ENCODE measurements at regions of chr14 and their contacts with region 1.

Region 1: GRCh38 chr14:53953002-53953827 is 3.4 kb downstream of the BMP4 start:
- DNase-seq: peak; percentile 94
- H3K4me3 ChIP-seq: peak overlapping the region; percentile 77 to 99 (median 86)
- H3K27ac ChIP-seq: peak overlapping the region; percentile 73
- H3K4me1 ChIP-seq: peaks cover 35% of the 10 kb centered on the region
- H3K27me3 ChIP-seq: no peaks in the 10 kb centered on the region
- CTCF ChIP-seq: no peak
- POLR2A ChIP-seq: peak; percentile 99

Region 2: GRCh38 chr14:53247596-53248370 is 705.4 kb before region 1 on chr14:
- CTCF ChIA-PET with region 1: no interaction called
- POLR2A ChIA-PET with region 1: no interaction called
- dilution Hi-C with region 1: no loop called
- intact Hi-C with region 1: no loop called
- DNase-seq: no peak
- H3K4me3 ChIP-seq: no peak overlapping the region
- H3K27ac ChIP-seq: no peak overlapping the region
- H3K4me1 ChIP-seq: no peaks in the 10 kb centered on the region
- H3K27me3 ChIP-seq: no peaks in the 10 kb centered on the region
- CTCF ChIP-seq: no peak
- POLR2A ChIP-seq: no peak

Region 3: GRCh38 chr14:53368711-53369191 is 584.5 kb before region 1 on chr14:
- CTCF ChIA-PET with region 1: no interaction called
- POLR2A ChIA-PET with region 1: no interaction called
- dilution Hi-C with region 1: no loop called
- intact Hi-C with region 1: loop called (anchors 5 kb)
- DNase-seq: peak; percentile 77
- H3K4me3 ChIP-seq: no peak overlapping the region
- H3K27ac ChIP-seq: peak overlapping the region; percentile 72
- H3K4me1 ChIP-seq: peaks cover 45% of the 10 kb centered on the region
- H3K27me3 ChIP-seq: no peaks in the 10 kb centered on the region
- CTCF ChIP-seq: no peak
- POLR2A ChIP-seq: no peak

Region 4: DNA sequence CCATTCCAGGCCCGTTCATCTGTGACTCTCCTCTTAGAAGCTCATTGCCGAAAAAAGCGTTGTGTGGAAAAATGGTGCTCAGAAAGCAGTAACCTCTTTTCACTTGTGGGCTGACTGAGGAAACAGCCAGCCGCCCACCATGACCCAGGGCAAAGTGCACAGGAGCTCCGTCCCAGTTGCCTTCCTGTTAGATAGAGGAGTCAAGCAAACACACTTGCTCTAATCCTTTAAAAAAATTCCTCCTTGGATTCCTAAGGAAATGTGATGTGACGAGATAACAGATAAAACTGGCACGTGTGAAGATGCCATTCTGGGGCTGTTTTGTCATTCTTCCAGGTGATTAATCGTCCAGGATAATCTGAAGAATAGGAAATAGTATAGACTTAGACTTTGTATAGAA is 403.3 kb before region 1 on chr14:
- CTCF ChIA-PET with region 1: interaction called, 15 read pairs
- POLR2A ChIA-PET with region 1: interaction called, 12 read pairs
- dilution Hi-C with region 1: no loop called
- intact Hi-C with region 1: no loop called
- DNase-seq: peak; percentile 96
- H3K4me3 ChIP-seq: peak overlapping the region in 1 of 3 experiments; percentile 15
- H3K27ac ChIP-seq: peak overlapping the region; percentile 89
- H3K4me1 ChIP-seq: peaks cover 19% of the 10 kb centered on the region
- H3K27me3 ChIP-seq: no peaks in the 10 kb centered on the region
- CTCF ChIP-seq: no peak
- POLR2A ChIP-seq: peak; percentile 79

Region 5: DNA sequence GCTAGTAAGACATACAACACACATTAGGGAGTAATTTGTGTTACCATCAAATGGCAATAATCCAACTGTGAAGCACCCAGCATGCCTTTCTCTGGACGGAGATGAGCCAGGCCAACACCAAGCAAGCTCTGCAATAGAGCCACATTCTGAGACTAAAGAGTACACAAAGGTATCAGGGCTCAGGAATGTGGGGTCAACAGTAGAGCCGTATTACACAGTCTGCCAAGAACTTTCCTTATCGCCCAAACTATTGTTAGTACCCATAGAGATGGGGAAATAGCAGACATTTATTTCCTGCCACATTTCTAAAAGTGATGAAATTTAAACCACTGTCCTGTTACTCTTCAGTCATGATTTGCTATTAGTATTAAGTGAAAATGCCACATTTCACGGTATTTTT is 110.3 kb before region 1 on chr14:
- CTCF ChIA-PET with region 1: interaction called, 3 read pairs
- POLR2A ChIA-PET with region 1: no interaction called
- dilution Hi-C with region 1: no loop called
- intact Hi-C with region 1: loop called (anchors 1 kb)
- DNase-seq: peak; percentile 75
- H3K4me3 ChIP-seq: no peak overlapping the region
- H3K27ac ChIP-seq: peak overlapping the region; percentile 87
- H3K4me1 ChIP-seq: peaks cover 34% of the 10 kb centered on the region
- H3K27me3 ChIP-seq: no peaks in the 10 kb centered on the region
- CTCF ChIP-seq: no peak
- POLR2A ChIP-seq: peak; percentile 67

Region 6: GRCh38 chr14:53963320-53964227 is 10.4 kb after region 1 on chr14:
- CTCF ChIA-PET with region 1: interaction called, 11 read pairs
- POLR2A ChIA-PET with region 1: interaction called, 4 read pairs
- dilution Hi-C with region 1: no loop called
- intact Hi-C with region 1: no loop called
- DNase-seq: peak; percentile 44
- H3K4me3 ChIP-seq: peak overlapping the region in 2 of 3 experiments; percentile 0 to 35
- H3K27ac ChIP-seq: no peak overlapping the region
- H3K4me1 ChIP-seq: peaks cover 4% of the 10 kb centered on the region
- H3K27me3 ChIP-seq: peaks cover 0 to 3% of the 10 kb centered on the region in 2 experiments
- CTCF ChIP-seq: peak; percentile 44 to 60
- POLR2A ChIP-seq: no peak

Region 7: DNA sequence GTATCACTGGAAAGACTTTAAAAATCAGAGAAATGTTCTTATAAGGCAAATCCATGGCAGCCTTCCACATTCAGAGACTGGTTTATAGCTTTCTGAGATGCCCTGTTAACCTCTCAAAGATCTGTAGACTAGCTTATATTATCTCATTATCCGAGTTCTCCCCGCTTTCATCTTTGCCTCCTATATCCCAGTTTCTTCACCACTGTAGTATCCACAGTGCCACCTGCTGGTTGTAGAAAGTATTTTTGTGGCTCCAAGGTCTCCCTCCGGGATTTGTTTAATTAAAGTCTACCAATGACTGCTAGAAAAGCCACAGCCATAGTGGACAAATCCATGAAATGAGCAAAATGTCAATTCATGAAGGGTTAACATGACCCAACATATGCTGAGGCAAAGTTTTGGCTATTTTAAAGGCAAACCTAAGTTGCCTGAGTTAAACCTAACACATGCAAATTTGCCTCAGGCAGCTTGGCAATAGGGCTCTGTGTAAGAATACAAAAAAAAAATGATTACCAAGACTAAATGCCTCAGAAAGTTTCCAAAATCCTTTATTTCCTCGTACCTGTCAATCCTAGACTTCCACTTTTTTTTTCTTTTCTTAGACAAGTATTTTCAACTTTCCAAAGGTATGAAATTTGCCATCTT is 222.2 kb after region 1 on chr14:
- CTCF ChIA-PET with region 1: interaction called, 164 read pairs
- POLR2A ChIA-PET with region 1: interaction called, 7 read pairs
- dilution Hi-C with region 1: no loop called
- intact Hi-C with region 1: loop called (anchors 1 kb)
- DNase-seq: peak; percentile 91
- H3K4me3 ChIP-seq: no peak overlapping the region
- H3K27ac ChIP-seq: no peak overlapping the region
- H3K4me1 ChIP-seq: peaks cover 36% of the 10 kb centered on the region
- H3K27me3 ChIP-seq: no peaks in the 10 kb centered on the region
- CTCF ChIP-seq: peak; percentile 57 to 62
- POLR2A ChIP-seq: no peak

Region 8: DNA sequence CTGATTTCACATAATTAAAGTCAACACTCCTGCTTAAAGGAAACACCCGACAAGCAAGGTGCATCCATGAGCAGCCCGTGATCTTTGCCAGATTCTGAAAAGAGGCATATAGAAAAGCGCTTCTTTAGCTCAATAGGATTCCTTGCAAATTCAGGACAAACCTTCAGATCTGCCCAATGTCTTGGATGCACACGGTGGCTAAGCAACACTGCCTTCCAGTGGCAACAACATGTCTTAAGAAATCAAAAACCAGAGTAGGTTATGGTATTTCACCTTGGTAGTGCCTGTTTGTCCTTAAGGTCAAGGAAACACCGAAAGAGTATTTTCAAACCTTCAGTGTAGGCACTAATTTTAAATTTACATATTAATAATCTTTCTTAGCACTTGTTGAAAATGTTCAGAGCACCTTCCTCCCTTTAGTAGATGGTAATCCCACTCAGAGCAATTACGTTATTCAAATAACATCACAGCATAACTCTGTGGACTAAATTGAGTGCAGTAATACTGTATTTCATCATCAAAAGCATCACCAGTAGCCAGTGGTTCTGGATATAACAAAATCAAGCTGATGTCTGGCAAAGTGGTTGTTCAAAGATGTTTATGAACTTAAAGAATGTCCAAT is 385.6 kb after region 1 on chr14:
- CTCF ChIA-PET with region 1: interaction called, 34 read pairs
- POLR2A ChIA-PET with region 1: interaction called, 4 read pairs
- dilution Hi-C with region 1: no loop called
- intact Hi-C with region 1: loop called (anchors 1 kb)
- DNase-seq: peak; percentile 78
- H3K4me3 ChIP-seq: no peak overlapping the region
- H3K27ac ChIP-seq: no peak overlapping the region
- H3K4me1 ChIP-seq: peaks cover 10% of the 10 kb centered on the region
- H3K27me3 ChIP-seq: no peaks in the 10 kb centered on the region
- CTCF ChIP-seq: peak; percentile 63 to 68
- POLR2A ChIP-seq: no peak

Region 9: DNA sequence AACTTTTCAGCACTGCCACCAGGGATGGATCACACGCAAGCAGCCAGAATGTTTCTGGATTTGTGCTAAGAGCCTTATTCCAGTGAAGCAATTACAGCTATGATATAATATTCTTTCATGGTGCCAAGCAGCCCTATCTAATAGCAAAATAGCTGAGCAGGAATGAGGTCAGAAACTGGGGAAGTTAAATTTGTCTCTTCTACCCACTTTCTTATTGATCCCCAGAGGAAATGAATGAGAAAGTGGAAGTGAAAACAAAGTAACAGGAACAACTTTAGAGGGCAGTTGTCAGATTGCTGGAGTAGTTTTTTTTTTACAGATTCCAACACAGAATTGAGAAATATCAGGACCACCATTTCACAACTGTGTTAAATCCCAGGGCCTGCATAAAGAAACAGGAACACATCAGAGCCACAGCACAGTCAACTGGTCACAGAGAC is 904.6 kb after region 1 on chr14:
- CTCF ChIA-PET with region 1: no interaction called
- POLR2A ChIA-PET with region 1: no interaction called
- dilution Hi-C with region 1: no loop called
- intact Hi-C with region 1: no loop called
- DNase-seq: no peak
- H3K4me3 ChIP-seq: no peak overlapping the region
- H3K27ac ChIP-seq: no peak overlapping the region
- H3K4me1 ChIP-seq: no peaks in the 10 kb centered on the region
- H3K27me3 ChIP-seq: no peaks in the 10 kb centered on the region
- CTCF ChIP-seq: no peak
- POLR2A ChIP-seq: no peak